Right cardiac atrium (tissue), 5 donors: ENCODE measurements at regions of chr7 and their contacts with region 1.

Region 1: DNA sequence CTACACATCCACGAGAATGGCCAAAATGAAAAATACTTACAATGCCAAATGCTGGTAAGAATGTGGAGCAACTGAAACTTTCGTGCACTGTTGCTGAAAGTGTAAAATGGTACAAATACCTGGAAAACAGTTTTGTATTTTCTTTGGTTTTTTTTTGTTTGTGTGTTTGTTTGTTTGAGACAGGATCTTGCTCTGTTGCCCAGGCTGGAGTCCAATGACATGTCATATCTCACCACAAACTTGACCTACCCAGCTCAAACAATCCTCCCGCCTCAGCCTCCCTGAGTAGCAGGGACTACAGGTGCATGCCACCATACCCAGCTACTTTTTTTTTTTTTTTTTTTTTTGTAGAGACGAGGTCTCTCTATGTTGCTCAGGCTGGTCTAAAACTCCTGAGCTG is 35.6 kb upstream of the CAV2 start:
- DNase-seq: no peak
- ATAC-seq: no peak
- H3K4me3 ChIP-seq: no peak overlapping the region
- H3K27ac ChIP-seq: no peak overlapping the region
- H3K4me1 ChIP-seq: no peaks in the 10 kb centered on the region
- H3K27me3 ChIP-seq: no peaks in the 10 kb centered on the region

Region 2: DNA sequence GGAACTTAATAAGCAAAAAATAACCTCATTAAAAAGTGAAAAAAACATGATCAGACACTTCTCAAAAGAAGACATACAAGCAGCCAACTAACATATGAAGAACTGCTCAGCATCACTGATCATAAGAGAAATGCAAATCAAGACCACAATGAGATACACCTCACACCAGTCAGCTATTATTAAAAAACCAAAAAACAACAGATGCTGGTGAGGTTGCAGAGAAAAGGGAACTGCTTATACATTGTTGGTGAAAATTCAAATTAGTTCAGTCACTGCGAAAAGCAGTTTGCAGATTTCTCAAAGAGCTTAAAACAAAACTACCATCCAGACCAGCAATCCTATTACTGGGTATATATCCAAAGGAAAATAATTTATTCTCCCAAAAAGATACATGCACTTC is 1028.8 kb before region 1 on chr7:
- intact Hi-C with region 1: no loop called
- DNase-seq: no peak
- ATAC-seq: no peak
- H3K4me3 ChIP-seq: no peak overlapping the region
- H3K27ac ChIP-seq: no peak overlapping the region
- H3K4me1 ChIP-seq: no peaks in the 10 kb centered on the region
- H3K27me3 ChIP-seq: no peaks in the 10 kb centered on the region

Region 3: DNA sequence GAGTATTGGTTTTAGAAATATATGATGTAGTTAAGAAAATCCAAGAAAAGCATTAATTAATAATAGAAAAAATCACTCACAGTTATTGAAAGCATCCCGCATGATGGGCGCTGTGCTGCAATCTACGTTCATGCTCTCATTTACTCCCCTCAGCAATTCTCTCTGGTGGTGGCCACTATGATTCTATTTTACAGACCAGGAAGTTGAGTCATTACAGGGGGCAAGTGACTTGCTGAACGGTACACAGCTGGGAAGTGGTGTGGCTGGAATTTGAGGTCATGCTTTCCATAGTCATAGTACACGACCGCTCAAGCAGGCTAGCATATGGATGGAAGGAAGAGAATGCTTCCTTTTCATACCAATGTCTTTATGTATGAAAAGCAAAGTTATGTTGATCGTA is 136.2 kb before region 1 on chr7:
- intact Hi-C with region 1: no loop called
- DNase-seq: no peak
- ATAC-seq: no peak
- H3K4me3 ChIP-seq: no peak overlapping the region
- H3K27ac ChIP-seq: no peak overlapping the region
- H3K4me1 ChIP-seq: peaks cover 4% of the 10 kb centered on the region
- H3K27me3 ChIP-seq: no peaks in the 10 kb centered on the region

Region 4: DNA sequence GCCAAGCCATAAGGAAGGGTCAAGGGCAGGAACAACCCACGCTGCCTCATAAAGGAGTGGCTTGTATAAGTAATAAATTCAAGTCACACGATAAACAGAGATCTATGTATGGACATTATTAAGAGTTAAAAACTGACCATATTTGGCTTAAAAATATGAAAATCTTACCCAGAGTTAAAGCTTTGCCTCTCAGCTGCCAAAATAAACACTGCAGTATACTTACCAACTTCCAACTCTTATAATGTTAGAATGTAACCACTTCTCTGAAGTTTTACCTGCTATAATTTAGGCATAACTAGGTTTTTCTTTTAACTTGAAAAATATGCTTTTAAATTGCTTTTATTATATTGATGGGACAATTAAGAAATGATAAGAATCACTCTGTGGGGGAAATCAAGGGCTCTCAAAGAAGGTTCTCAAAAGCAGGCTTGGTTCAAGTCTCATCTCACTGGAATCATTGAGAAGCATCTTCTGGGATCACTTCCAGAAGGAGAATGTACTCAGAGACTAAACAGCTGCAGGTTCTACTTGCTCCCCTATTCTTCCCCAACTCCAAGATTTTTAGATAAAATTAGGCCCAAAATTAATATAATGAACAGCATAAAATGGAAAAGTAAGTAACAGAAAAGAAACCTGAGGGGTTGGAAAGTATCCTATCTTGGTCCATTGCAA is 19.5 kb after region 1 on chr7:
- intact Hi-C with region 1: loop called in 1 of 4 experiments (anchors 2 kb)
- DNase-seq: no peak
- ATAC-seq: no peak
- H3K4me3 ChIP-seq: no peak overlapping the region
- H3K27ac ChIP-seq: no peak overlapping the region
- H3K4me1 ChIP-seq: no peaks in the 10 kb centered on the region
- H3K27me3 ChIP-seq: no peaks in the 10 kb centered on the region

Region 5: DNA sequence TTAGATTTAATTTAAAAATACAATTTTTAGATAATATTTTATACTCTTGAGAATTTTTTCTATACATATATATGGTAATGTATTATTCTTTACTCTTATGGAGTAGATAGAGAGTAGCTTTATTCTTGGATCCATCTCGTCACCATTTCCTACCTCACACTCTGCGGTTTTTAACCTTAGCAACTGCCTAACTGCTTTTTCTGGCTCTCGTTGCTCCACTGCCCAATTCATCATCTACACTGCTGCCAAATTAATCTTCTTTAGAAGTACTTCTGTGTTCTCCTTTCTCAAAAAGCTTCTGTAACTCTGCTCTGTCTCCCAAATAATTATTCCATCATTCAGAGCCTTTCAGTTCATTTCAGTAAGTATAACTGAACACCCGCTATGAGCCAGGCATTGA is 433.7 kb after region 1 on chr7:
- intact Hi-C with region 1: no loop called
- DNase-seq: no peak
- ATAC-seq: peak; percentile 44 to 45
- H3K4me3 ChIP-seq: no peak overlapping the region
- H3K27ac ChIP-seq: no peak overlapping the region
- H3K4me1 ChIP-seq: no peaks in the 10 kb centered on the region
- H3K27me3 ChIP-seq: no peaks in the 10 kb centered on the region